Colonic mucosa (tissue), 4 donors: ENCODE measurements at regions of chr7 and their contacts with region 1.

Region 1: GRCh38 chr7:131737746-131738465 is 181.5 kb upstream of the PODXL start:
- DNase-seq: no peak
- H3K4me3 ChIP-seq: no peak overlapping the region
- H3K27ac ChIP-seq: no peak overlapping the region
- H3K4me1 ChIP-seq: no peaks in the 10 kb centered on the region
- H3K27me3 ChIP-seq: no peaks in the 10 kb centered on the region
- CTCF ChIP-seq: no peak

Region 2: DNA sequence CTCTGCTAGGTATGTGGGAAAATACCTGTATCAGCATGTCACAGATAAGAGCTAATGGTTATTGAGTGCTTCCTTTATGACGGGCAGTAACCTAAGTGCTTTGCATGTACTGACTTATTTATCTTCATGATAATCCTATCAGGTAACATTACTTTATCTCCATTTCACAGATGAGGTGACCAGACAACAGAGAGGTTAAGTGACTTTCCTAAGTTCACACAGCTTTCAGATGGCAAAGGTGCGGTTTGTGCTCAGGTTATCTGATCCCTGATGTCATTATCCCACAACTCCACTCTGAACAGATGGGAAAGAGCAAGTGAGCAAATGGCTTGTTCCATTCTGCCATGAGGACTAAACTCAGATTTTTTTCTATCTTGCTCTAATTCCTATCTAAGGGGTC is 35.5 kb after region 1 on chr7:
- intact Hi-C with region 1: loop called (anchors 2 kb)
- DNase-seq: no peak
- H3K4me3 ChIP-seq: no peak overlapping the region
- H3K27ac ChIP-seq: no peak overlapping the region
- H3K4me1 ChIP-seq: no peaks in the 10 kb centered on the region
- H3K27me3 ChIP-seq: no peaks in the 10 kb centered on the region
- CTCF ChIP-seq: no peak